Mammary epithelial cell (primary cell): ENCODE measurements at regions of chr2 and their contacts with region 1.

Region 1: DNA sequence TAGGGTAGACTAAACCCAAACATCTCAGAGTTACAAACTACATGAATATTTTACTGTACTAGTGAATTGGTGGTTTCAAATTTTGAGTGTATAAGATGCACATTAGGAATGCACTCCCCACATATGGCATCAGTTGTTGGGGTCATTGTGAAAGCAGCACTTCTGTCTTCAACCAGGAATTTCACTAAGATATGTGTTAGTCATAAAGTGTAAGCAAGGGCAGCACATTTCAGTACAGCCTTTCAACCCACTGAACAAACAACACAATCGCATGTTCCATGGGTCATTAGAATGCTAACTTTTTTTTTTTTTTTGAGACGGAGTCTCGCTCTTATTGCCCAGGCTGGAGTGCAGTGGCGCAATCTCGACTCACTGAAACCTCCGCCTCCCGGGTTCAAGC is 164.1 kb upstream of the MAP2 start:
- DNase-seq: no peak
- H3K4me3 ChIP-seq: no peak overlapping the region
- H3K27ac ChIP-seq: no peak overlapping the region
- H3K4me1 ChIP-seq: no peaks in the 10 kb centered on the region
- H3K27me3 ChIP-seq: no peaks in the 10 kb centered on the region
- CTCF ChIP-seq: no peak

Region 2: GRCh38 chr2:209113026-209113425 is 146.7 kb before region 1 on chr2:
- CTCF ChIA-PET with region 1: interaction called, 10 read pairs
- dilution Hi-C with region 1: no loop called
- in situ Hi-C with region 1: no loop called
- intact Hi-C with region 1: no loop called
- DNase-seq: no peak
- H3K4me3 ChIP-seq: no peak overlapping the region
- H3K27ac ChIP-seq: no peak overlapping the region
- H3K4me1 ChIP-seq: no peaks in the 10 kb centered on the region
- H3K27me3 ChIP-seq: no peaks in the 10 kb centered on the region
- CTCF ChIP-seq: no peak

Region 3: DNA sequence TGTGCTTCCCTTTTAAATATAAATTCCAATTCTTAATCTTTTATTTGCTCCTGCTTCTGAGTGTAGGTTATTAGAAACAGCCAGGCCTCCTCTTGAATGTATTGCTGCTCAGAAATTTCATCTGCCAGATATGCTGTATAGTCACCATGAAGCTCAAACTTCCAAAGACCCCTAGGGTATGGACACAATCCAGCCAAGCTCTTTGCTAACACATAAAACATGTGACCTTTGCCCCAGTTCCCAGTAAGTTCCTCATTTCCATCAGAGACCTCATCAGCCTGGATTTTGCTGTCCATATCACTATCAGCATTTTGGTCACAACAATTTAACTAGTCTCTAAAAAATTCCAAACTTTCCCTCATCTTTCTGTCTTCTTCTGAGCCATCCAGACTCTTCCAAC is 239.3 kb after region 1 on chr2:
- CTCF ChIA-PET with region 1: no interaction called
- dilution Hi-C with region 1: no loop called
- in situ Hi-C with region 1: no loop called
- intact Hi-C with region 1: no loop called
- DNase-seq: peak; percentile 2
- H3K4me3 ChIP-seq: no peak overlapping the region
- H3K27ac ChIP-seq: no peak overlapping the region
- H3K4me1 ChIP-seq: peaks cover 19% of the 10 kb centered on the region
- H3K27me3 ChIP-seq: no peaks in the 10 kb centered on the region
- CTCF ChIP-seq: no peak

Region 4: GRCh38 chr2:209565896-209566582 is 306.3 kb after region 1 on chr2:
- CTCF ChIA-PET with region 1: no interaction called
- dilution Hi-C with region 1: no loop called
- in situ Hi-C with region 1: no loop called
- intact Hi-C with region 1: no loop called
- DNase-seq: no peak
- H3K4me3 ChIP-seq: no peak overlapping the region
- H3K27ac ChIP-seq: no peak overlapping the region
- H3K4me1 ChIP-seq: no peaks in the 10 kb centered on the region
- H3K27me3 ChIP-seq: no peaks in the 10 kb centered on the region
- CTCF ChIP-seq: no peak